Astrocyte of the cerebellum (primary cell): ENCODE measurements at regions of chr2 and their contacts with region 1.

Region 1: DNA sequence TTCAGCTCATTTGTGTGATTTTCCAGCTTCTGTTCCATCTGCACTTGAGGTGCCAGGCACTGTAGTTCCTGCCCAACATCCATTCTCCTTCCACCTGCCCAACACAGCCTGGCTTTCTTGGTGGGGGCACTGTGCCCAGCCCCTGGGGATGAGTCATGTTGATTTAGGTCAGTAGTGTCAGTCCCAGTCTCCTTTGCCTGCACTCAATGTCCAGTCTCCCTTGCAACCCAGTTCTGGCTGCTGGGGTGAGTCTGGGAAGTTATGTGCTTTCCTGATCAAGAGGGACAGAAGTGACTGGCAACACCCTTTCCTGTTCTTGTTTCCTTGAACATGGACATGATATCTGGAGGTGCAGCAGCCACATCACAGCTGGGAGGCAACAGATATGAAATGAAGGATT is 1.5 kb upstream of the ASB18 start:
- DNase-seq: no peak
- H3K4me3 ChIP-seq: no peak overlapping the region
- CTCF ChIP-seq: no peak

Region 2: DNA sequence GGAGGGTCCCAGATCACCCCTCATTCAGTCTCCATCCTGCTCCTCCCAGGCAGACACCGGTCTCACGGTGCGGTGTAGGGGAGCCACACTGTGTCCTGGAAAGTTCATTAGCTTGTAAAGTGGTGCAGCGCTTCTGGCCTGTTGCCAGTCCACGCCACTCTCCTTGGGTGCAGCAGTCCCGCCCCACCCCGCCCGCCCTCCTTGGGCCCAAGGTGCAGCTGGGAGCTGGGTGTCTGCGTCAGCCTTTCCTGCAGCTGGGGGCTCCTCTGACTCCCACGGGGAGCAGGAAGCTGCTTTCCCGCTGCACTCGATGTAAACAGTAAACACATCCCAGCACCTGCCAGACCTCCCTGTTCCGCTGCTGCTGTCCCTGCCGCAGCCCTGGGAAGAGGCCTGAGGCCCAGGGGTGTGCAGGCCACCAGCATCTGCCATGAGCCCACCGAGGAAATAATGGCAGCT is 52.3 kb after region 1 on chr2:
- in situ Hi-C with region 1: loop called (anchors 5 kb)
- DNase-seq: no peak
- H3K4me3 ChIP-seq: no peak overlapping the region
- CTCF ChIP-seq: no peak